ENCODE measurements at regions of chr13 and their contacts with region 1.

Region 1: GRCh38 chr13:75219479-75220237 is 262.3 kb downstream of the TBC1D4 start:
- DNase-seq: peak; percentile 80 to 86
- ATAC-seq: peak; percentile 93 to 99 (median 97)
- H3K4me3 ChIP-seq: peak overlapping the region in 9 of 10 donors; percentile 0 to 47 (median 37)
- H3K27ac ChIP-seq: no peak overlapping the region
- H3K4me1 ChIP-seq: peaks cover 0 to 9% (median 5%) of the 10 kb centered on the region in 9 donors
- H3K27me3 ChIP-seq: peaks cover 0 to 16% (median 0%) of the 10 kb centered on the region in 7 donors
- CTCF ChIP-seq: peak; percentile 91 to 99 (median 98)

Region 2: GRCh38 chr13:73754727-73755292 is 1464.8 kb before region 1 on chr13:
- intact Hi-C with region 1: loop called in 8 of 10 experiments (anchors 2 to 10 kb)
- DNase-seq: peak in 1 of 2 donors; percentile 51
- ATAC-seq: peak in 5 of 8 donors; percentile 52 to 78 (median 62)
- H3K4me3 ChIP-seq: no peak overlapping the region
- H3K27ac ChIP-seq: no peak overlapping the region
- H3K4me1 ChIP-seq: peaks cover 0 to 10% (median 0%) of the 10 kb centered on the region in 9 donors
- H3K27me3 ChIP-seq: no peaks in the 10 kb centered on the region
- CTCF ChIP-seq: peak; percentile 56 to 84 (median 74)

Region 3: GRCh38 chr13:73835138-73835721 is 1384.4 kb before region 1 on chr13:
- intact Hi-C with region 1: loop called in 6 of 10 experiments (anchors 5 to 10 kb)
- DNase-seq: no peak
- ATAC-seq: peak in 5 of 8 donors; percentile 35 to 58 (median 50)
- H3K4me3 ChIP-seq: no peak overlapping the region
- H3K27ac ChIP-seq: no peak overlapping the region
- H3K4me1 ChIP-seq: peaks cover 0 to 30% (median 8%) of the 10 kb centered on the region in 9 donors
- H3K27me3 ChIP-seq: no peaks in the 10 kb centered on the region
- CTCF ChIP-seq: peak; percentile 51 to 83 (median 71)

Region 4: GRCh38 chr13:74287724-74288169 is 931.9 kb before region 1 on chr13:
- intact Hi-C with region 1: loop called in 1 of 10 experiments (anchors 10 kb)
- DNase-seq: peak; percentile 65 to 85
- ATAC-seq: peak in 7 of 8 donors; percentile 9 to 63 (median 48)
- H3K4me3 ChIP-seq: peak overlapping the region in 8 of 10 donors; percentile 7 to 50 (median 34)
- H3K27ac ChIP-seq: peak overlapping the region in 4 of 10 donors; percentile 25 to 68 (median 52)
- H3K4me1 ChIP-seq: peaks cover 0 to 42% (median 22%) of the 10 kb centered on the region in 9 donors
- H3K27me3 ChIP-seq: no peaks in the 10 kb centered on the region
- CTCF ChIP-seq: no peak

Region 5: DNA sequence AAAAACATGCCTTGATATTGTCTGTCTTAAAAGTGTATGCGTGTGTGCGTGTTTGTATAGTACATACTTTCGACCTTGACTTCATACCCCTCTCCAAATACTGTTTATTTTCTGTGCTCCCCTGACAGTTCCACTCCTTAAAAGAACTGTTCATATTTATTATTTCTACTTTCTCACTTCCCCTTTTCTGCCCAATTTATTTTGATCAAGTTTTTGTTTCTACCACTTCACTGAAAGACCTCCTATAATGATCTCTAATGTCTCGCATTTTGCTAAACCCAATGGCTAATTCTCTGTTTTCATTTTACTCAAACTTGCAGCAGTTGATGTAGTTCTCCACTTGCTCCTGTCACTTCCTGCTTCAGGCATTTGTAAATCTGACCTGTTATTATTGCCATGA is 659.3 kb before region 1 on chr13:
- intact Hi-C with region 1: loop called in 1 of 10 experiments (anchors 10 kb)
- DNase-seq: no peak
- ATAC-seq: no peak
- H3K4me3 ChIP-seq: no peak overlapping the region
- H3K27ac ChIP-seq: no peak overlapping the region
- H3K4me1 ChIP-seq: no peaks in the 10 kb centered on the region
- H3K27me3 ChIP-seq: no peaks in the 10 kb centered on the region
- CTCF ChIP-seq: no peak

Region 6: DNA sequence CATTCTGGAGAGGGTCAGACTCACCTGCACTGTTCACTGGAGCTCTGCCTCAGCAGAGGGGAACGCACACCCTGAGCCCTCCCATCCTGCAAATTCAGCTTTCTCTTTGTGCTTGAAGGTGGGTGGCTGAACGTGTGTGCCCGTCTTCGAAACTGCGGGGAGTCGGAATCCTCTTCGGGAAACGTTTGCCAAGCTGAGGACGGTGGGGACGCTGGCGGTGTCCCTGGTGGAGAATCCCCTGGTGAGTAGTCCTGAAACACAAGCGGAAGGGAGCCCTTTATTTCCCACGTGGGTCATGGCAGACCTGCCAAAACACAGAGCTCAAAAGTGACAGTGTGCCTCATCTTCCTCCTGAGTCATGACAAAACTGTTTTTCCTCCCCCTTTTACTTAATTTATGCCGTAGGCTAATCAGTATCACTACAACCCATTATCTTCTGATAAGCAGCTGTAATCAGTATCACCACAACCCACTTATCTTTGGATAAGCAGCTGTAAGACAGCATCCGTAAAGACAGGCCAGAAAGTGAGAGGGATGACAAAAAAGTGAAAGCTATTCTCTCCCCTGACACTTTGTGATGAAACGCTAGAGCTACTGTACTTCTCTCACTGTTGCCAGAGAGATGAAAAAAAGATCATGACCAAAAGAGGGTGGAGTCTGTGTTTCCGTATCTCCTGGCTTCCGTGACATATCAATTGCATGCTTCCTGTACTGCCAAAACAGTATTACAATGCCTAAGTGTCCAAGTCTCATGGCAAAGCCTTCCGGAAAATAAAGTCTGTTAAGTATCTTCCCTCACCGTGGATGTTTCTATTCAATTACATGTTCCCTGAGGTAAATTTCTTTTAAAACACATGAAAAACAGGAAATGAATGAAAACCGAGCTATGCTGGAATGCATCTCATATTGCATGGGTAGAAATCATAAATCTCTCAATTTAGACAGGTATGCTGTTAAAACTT is 106.8 kb after region 1 on chr13:
- intact Hi-C with region 1: no loop called
- DNase-seq: no peak
- ATAC-seq: peak; percentile 57 to 90 (median 78)
- H3K4me3 ChIP-seq: peak overlapping the region in 6 of 10 donors; percentile 21 to 36 (median 31)
- H3K27ac ChIP-seq: peak overlapping the region in 8 of 10 donors; percentile 9 to 67 (median 43)
- H3K4me1 ChIP-seq: peaks cover 0 to 45% (median 23%) of the 10 kb centered on the region in 9 donors
- H3K27me3 ChIP-seq: no peaks in the 10 kb centered on the region
- CTCF ChIP-seq: no peak

Measured in heart right ventricle (tissue), 16 donors.